ENCODE measurements at regions of chr1 and their contacts with region 1.

Region 1: GRCh38 chr1:117758444-117759316 is 152.8 kb downstream of the TENT5C start:
- DNase-seq: peak; percentile 78
- H3K4me3 Mint-ChIP-seq: peak overlapping the region; percentile 64
- H3K27ac Mint-ChIP-seq: no peak overlapping the region
- H3K4me1 Mint-ChIP-seq: peaks cover 10% of the 10 kb centered on the region
- H3K27me3 Mint-ChIP-seq: peaks cover 39% of the 10 kb centered on the region

Region 2: GRCh38 chr1:117512743-117513321 is 245.8 kb before region 1 on chr1:
- CTCF ChIA-PET with region 1: interaction called, 56 read pairs
- DNase-seq: no peak
- H3K4me3 Mint-ChIP-seq: no peak overlapping the region
- H3K27ac Mint-ChIP-seq: no peak overlapping the region
- H3K4me1 Mint-ChIP-seq: no peaks in the 10 kb centered on the region
- H3K27me3 Mint-ChIP-seq: no peaks in the 10 kb centered on the region

Region 3: DNA sequence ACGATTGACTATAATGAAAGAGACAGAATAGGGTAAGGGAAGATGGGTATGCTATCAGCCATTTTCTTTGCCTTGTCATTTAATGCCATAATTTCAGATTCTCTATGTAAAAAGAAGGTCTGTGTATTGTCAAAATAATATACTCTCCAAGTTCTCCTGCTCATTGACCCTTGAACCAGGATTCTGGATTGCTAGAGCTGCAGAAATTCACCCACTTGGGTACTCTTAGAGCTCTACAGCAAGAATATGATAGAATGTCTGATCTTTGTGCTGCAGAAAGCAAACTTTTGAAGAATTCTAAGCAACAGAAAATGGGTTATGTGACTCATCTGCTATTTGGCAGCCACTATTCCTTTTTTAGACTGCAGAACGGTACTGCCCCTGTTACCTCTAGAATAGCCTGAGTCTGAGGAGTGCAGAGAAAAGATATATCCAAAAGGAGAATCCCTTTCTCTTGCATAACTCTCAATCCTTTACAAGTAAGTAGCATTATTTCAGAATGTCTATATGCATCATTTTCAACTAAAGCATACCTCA is 231.0 kb before region 1 on chr1:
- CTCF ChIA-PET with region 1: interaction called, 260 read pairs
- DNase-seq: no peak
- H3K4me3 Mint-ChIP-seq: no peak overlapping the region
- H3K27ac Mint-ChIP-seq: no peak overlapping the region
- H3K4me1 Mint-ChIP-seq: no peaks in the 10 kb centered on the region
- H3K27me3 Mint-ChIP-seq: no peaks in the 10 kb centered on the region

Region 4: DNA sequence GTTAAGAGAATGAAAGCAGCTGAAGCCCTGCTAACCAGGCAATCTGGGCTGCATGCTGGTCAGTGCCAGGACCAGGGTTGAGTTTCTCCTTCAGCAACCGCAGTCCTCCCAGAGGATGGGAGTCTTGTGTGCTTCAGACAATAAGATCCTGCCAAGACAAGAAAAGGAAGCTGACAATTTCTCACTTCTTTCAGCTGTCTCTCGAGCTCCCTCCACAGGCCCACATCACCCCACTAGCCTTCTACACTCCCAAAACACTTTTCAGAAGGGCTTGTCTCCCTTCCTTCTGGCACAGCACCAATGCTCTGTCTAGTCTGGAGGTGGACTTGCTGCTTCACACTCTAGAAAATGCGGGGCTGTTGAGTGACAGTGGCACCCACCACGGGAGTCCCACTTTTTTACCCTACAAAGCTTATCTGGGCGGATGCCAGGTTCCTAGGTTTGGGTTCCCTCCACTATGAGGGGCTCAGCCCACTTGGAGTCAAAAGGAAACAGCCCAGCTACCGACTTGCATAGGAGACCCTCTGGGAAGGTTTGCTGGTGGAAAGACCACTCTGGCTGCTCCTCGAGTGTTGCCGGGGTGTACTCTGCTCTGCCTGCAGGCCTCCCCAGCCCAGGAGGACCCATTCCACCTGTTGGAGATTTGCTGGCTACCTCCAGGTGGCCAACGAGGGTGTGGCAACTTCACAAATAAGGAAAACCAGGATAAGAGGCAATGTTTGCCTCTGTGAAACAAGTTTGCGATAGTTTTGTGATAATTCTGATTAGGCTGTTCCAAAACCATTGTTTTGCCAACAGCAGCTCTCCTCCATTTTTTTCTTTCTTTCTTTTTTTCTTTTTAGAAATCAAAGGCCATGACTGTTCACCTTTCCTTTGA is 83.9 kb before region 1 on chr1:
- CTCF ChIA-PET with region 1: interaction called, 21 read pairs
- DNase-seq: peak; percentile 76
- H3K4me3 Mint-ChIP-seq: no peak overlapping the region
- H3K27ac Mint-ChIP-seq: no peak overlapping the region
- H3K4me1 Mint-ChIP-seq: peaks cover 33% of the 10 kb centered on the region
- H3K27me3 Mint-ChIP-seq: peaks cover 53% of the 10 kb centered on the region

Region 5: GRCh38 chr1:117710710-117711109 is 48.0 kb before region 1 on chr1:
- CTCF ChIA-PET with region 1: interaction called, 17 read pairs
- DNase-seq: no peak
- H3K4me3 Mint-ChIP-seq: no peak overlapping the region
- H3K27ac Mint-ChIP-seq: no peak overlapping the region
- H3K4me1 Mint-ChIP-seq: no peaks in the 10 kb centered on the region
- H3K27me3 Mint-ChIP-seq: peaks cover 54% of the 10 kb centered on the region

Region 6: DNA sequence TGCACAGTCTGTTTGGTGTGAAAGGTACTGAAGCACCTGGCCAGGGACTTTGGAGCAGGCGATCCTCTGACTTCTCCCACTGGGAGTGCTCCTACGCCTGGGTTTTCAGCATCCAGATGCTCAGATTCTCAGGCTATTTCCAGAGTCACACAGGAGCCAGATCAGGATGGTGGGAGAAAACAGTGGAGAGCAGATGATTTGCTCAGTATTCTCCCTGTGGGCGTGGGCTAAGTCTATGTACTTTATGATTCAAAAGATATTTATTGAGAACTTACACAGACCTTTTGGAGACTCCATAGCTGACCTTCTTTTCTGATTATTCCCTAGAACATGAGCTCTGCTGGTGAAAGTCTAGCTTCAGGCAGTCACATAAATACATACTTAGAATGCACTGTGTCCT is 18.2 kb before region 1 on chr1:
- CTCF ChIA-PET with region 1: interaction called, 22 read pairs
- DNase-seq: no peak
- H3K4me3 Mint-ChIP-seq: no peak overlapping the region
- H3K27ac Mint-ChIP-seq: no peak overlapping the region
- H3K4me1 Mint-ChIP-seq: peaks cover 1% of the 10 kb centered on the region
- H3K27me3 Mint-ChIP-seq: peaks cover 9% of the 10 kb centered on the region

Region 7: DNA sequence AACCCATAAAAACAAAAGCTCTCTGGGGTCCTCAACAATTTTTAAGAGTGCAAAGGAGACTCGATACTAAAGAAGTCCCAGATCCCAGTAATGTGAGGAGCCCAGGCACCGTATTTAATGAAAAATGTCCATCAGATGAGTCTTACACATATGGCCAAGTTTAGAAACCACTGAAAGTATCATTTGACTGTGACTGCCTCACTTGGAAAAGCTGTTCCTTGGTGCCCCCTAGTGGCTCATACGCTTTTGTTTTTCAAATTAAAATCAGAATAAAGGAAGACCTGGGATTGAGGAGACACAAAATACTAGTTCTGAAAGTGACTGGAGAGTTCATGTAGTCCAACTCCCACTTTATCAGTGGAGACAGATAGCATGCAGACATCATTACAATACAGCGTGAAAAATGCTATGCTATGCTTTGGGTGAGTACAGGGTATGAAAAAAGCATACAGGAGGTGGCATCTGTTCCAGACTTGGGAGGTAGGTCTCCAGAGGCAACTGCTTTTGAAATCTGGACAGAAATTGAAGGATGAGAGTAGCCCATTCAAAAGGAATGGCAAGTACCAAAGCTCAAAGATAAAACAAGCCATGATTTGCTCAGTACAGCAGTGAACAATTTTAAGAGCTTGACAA is 136.9 kb after region 1 on chr1:
- CTCF ChIA-PET with region 1: interaction called, 61 read pairs
- DNase-seq: peak; percentile 74
- H3K4me3 Mint-ChIP-seq: no peak overlapping the region
- H3K27ac Mint-ChIP-seq: no peak overlapping the region
- H3K4me1 Mint-ChIP-seq: no peaks in the 10 kb centered on the region
- H3K27me3 Mint-ChIP-seq: no peaks in the 10 kb centered on the region

Region 8: GRCh38 chr1:118201524-118201923 is 442.8 kb after region 1 on chr1:
- CTCF ChIA-PET with region 1: no interaction called
- DNase-seq: no peak
- H3K4me3 Mint-ChIP-seq: no peak overlapping the region
- H3K27ac Mint-ChIP-seq: no peak overlapping the region
- H3K4me1 Mint-ChIP-seq: no peaks in the 10 kb centered on the region
- H3K27me3 Mint-ChIP-seq: no peaks in the 10 kb centered on the region

Measured in activated naive CD4-positive, alpha-beta T cell treated with anti-CD3 and anti-CD28 coated beads, Interleukin-2, amount 10 ng/mL, durations not matched to agents 7 days and 5 days (primary cell).